Activated B cell treated with CpG ODN at 0.5 μM for 24 hours (primary cell): ENCODE measurements at regions of chr5 and their contacts with region 1.

Region 1: GRCh38 chr5:32232441-32233219 is 58.5 kb upstream of the GOLPH3 start:
- DNase-seq: peak; percentile 62
- ATAC-seq: peak; percentile 87
- H3K4me3 Mint-ChIP-seq: no peak overlapping the region
- H3K27ac Mint-ChIP-seq: peak overlapping the region; percentile 10
- H3K4me1 Mint-ChIP-seq: peaks cover 21% of the 10 kb centered on the region
- H3K27me3 Mint-ChIP-seq: no peaks in the 10 kb centered on the region
- CTCF ChIP-seq: no peak

Region 2: DNA sequence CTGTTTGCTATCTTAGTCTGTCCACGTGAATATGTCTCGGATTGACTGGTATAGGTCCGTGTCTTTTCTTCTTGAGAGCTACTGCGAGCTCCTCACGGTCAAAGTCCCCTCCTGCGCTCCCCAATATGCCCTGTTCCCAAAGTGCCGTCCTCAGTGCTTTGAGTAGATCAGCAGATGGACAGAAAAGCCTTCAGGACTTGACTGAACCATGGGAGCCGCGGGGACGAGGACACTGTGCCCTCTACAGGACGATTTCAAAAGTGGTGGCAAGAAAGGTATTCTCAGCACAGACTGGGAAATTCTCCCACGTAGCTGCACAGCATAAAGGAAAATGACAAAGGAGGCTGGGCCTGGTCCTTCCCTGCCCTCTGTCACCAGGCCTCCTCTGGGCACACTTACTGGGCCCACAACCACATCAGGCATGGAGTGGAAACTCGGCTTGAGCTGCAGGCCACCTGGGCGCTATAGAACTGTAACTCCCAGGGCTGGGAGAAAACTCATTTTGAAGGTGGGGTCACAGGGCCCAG is 96.7 kb after region 1 on chr5:
- CTCF ChIA-PET with region 1: interaction called, 187 read pairs
- POLR2A ChIA-PET with region 1: interaction called, 3 read pairs
- intact Hi-C with region 1: loop called (anchors 1 kb)
- DNase-seq: peak; percentile 21
- ATAC-seq: peak; percentile 87
- H3K4me3 Mint-ChIP-seq: no peak overlapping the region
- H3K27ac Mint-ChIP-seq: no peak overlapping the region
- H3K4me1 Mint-ChIP-seq: peaks cover 2% of the 10 kb centered on the region
- H3K27me3 Mint-ChIP-seq: no peaks in the 10 kb centered on the region
- CTCF ChIP-seq: no peak

Region 3: DNA sequence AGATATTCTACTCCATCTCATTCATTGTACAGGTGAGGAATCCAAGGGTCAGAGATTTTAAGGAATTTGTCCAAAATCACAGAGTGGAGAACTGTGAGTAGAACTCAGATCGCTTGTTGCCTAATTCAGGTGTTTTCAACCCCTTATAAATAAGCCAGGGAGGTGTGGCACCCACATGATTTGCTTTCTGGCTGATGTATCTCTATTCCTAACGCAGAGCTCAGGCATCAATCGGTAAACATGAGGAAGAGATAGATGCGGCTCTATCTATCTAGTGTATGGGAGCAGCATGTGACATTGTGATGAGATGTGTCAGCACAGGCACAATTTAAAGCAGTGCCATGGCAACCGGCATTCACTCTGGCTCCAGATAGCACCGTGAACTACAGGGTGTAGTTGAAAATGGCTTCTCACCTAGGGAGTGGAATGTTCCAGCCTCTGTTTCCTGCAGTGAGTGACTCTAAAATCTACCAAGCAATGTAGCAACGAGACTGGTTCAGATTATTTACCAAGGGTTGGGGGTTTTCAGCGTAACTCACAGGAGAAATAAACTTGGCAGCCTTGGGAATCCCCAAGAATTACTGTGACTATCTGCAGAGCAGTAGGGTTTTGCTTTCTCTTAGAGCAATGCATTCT is 299.4 kb after region 1 on chr5:
- CTCF ChIA-PET with region 1: no interaction called
- POLR2A ChIA-PET with region 1: no interaction called
- intact Hi-C with region 1: no loop called
- DNase-seq: no peak
- ATAC-seq: peak; percentile 73
- H3K4me3 Mint-ChIP-seq: peak overlapping the region; percentile 80
- H3K27ac Mint-ChIP-seq: peak overlapping the region; percentile 77
- H3K4me1 Mint-ChIP-seq: peaks cover 43% of the 10 kb centered on the region
- H3K27me3 Mint-ChIP-seq: no peaks in the 10 kb centered on the region
- CTCF ChIP-seq: no peak